ENCODE measurements at regions of chr4 and their contacts with region 1.

Region 1: GRCh38 chr4:55546756-55547465 is at the start of gene CLOCK:
- DNase-seq: peak; percentile 87 to 91
- H3K4me3 ChIP-seq: peak within 1 kb of the TSS; percentile 82
- H3K4me3 Mint-ChIP-seq: peak within 1 kb of the TSS; percentile 83
- H3K27ac Mint-ChIP-seq: peak within 1 kb of the TSS; percentile 63
- H3K4me1 ChIP-seq: peaks cover 19% of the 10 kb centered on the region
- H3K4me1 Mint-ChIP-seq: peaks cover 23% of the 10 kb centered on the region
- H3K27me3 ChIP-seq: no peaks in the 10 kb centered on the region
- H3K27me3 Mint-ChIP-seq: no peaks in the 10 kb centered on the region
- CTCF ChIP-seq: peak; percentile 47 to 50
- total RNA-seq, gene CLOCK: 9.5 and 12.0 TPM in 2 replicates

Region 2: GRCh38 chr4:55345980-55346850 is 200.7 kb before region 1 on chr4 and contains the start of gene SRD5A3:
- CTCF ChIA-PET with region 1: no interaction called
- POLR2A ChIA-PET with region 1: no interaction called
- intact Hi-C with region 1: loop called (anchors 5 kb)
- DNase-seq: peak; percentile 82 to 95
- H3K4me3 ChIP-seq: peak within 1 kb of the TSS; percentile 55
- H3K4me3 Mint-ChIP-seq: peak within 1 kb of the TSS; percentile 84
- H3K27ac Mint-ChIP-seq: peak within 1 kb of the TSS; percentile 93
- H3K4me1 ChIP-seq: peaks cover 9% of the 10 kb centered on the region; the same call in 1 of the 2 replicates
- H3K4me1 Mint-ChIP-seq: peaks cover 22% of the 10 kb centered on the region
- H3K27me3 ChIP-seq: no peaks in the 10 kb centered on the region
- H3K27me3 Mint-ChIP-seq: no peaks in the 10 kb centered on the region
- CTCF ChIP-seq: peak; percentile 71 to 84
- total RNA-seq, gene SRD5A3: 22.6 and 26.9 TPM in 2 replicates

Region 3: GRCh38 chr4:55435141-55435841 is 111.6 kb before region 1 on chr4:
- CTCF ChIA-PET with region 1: interaction called, 4 read pairs
- POLR2A ChIA-PET with region 1: no interaction called
- intact Hi-C with region 1: loop called (anchors 5 kb)
- DNase-seq: no peak
- H3K4me3 ChIP-seq: no peak overlapping the region
- H3K4me3 Mint-ChIP-seq: no peak overlapping the region
- H3K27ac Mint-ChIP-seq: no peak overlapping the region
- H3K4me1 ChIP-seq: peaks cover 48% of the 10 kb centered on the region
- H3K4me1 Mint-ChIP-seq: peaks cover 22% of the 10 kb centered on the region
- H3K27me3 ChIP-seq: no peaks in the 10 kb centered on the region
- H3K27me3 Mint-ChIP-seq: no peaks in the 10 kb centered on the region
- CTCF ChIP-seq: no peak

Region 4: DNA sequence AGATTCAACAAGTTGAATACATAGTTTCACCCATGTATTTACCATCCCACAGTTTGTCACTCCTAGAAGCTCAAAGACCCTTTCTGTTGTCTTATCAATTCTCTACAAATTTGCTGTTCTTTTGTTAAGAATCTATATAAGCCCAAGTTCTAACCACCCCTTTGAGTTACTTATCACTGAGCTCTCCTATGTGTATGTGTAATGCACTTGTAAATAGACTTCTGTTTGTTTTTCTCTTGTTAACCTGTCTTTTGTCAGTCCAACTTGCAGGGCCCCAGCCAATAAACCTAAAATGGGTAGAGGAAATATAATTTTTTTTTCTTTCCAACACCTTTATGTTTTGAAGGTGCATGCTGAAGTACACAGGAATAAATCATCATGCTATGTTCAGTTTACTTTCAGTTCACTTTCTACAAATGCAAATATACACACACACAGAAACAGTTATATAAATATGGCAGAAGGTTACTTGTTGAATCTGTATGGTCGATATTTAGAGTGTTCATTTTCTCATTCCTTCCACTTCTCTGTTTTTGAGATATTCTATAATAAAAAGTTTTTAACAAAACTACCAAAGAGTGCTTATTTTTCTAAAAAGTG is 22.1 kb after region 1 on chr4:
- CTCF ChIA-PET with region 1: interaction called, 4 read pairs
- POLR2A ChIA-PET with region 1: no interaction called
- intact Hi-C with region 1: loop called (anchors 2 kb)
- DNase-seq: peak in 1 of 2 experiments; percentile 25
- H3K4me3 ChIP-seq: no peak overlapping the region
- H3K4me3 Mint-ChIP-seq: no peak overlapping the region
- H3K27ac Mint-ChIP-seq: no peak overlapping the region
- H3K4me1 ChIP-seq: 0 out of 2 replicates have a peak, but pooled peaks cover 6% of the 10 kb centered on the region
- H3K4me1 Mint-ChIP-seq: peaks cover 12% of the 10 kb centered on the region
- H3K27me3 ChIP-seq: no peaks in the 10 kb centered on the region
- H3K27me3 Mint-ChIP-seq: peaks cover 15% of the 10 kb centered on the region
- CTCF ChIP-seq: no peak

Region 5: DNA sequence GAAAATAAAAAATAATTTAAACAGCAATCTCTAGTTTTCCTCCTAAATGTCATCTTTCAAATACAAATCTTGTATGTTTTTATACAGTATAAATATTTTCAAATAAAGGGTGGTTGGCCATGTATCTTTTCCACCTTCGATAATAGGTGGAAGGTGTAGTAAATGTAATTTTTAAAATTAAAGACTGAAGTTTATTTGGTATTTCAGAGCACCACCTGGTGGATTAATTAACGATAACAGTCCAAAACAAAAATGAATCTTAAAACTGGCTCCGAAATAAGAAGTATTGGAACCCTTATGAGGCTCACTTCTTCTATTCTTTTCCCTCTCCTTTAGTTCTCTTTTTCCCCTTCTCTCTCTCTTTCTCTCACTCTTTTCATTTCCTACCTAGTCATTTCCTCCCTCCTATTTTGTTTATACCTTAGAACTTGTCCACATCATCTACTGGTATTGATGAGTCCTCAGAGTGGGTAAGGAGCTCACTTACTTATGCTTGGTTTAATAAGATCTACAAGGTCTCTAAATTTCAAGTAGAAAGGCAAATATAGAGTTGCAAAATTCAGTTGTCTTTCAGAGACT is 189.8 kb after region 1 on chr4:
- CTCF ChIA-PET with region 1: no interaction called
- POLR2A ChIA-PET with region 1: no interaction called
- intact Hi-C with region 1: loop called (anchors 10 kb)
- DNase-seq: no peak
- H3K4me3 ChIP-seq: no peak overlapping the region
- H3K4me3 Mint-ChIP-seq: no peak overlapping the region
- H3K27ac Mint-ChIP-seq: no peak overlapping the region
- H3K4me1 ChIP-seq: no peaks in the 10 kb centered on the region
- H3K4me1 Mint-ChIP-seq: no peaks in the 10 kb centered on the region
- H3K27me3 ChIP-seq: no peaks in the 10 kb centered on the region
- H3K27me3 Mint-ChIP-seq: peaks cover 21% of the 10 kb centered on the region
- CTCF ChIP-seq: peak; percentile 10 to 19

Region 6: GRCh38 chr4:56245547-56246232 is 698.8 kb after region 1 on chr4:
- CTCF ChIA-PET with region 1: no interaction called
- POLR2A ChIA-PET with region 1: no interaction called
- intact Hi-C with region 1: no loop called
- DNase-seq: no peak
- H3K4me3 ChIP-seq: no peak overlapping the region
- H3K4me3 Mint-ChIP-seq: no peak overlapping the region
- H3K27ac Mint-ChIP-seq: peak overlapping the region; percentile 16
- H3K4me1 ChIP-seq: peaks cover 62% of the 10 kb centered on the region
- H3K4me1 Mint-ChIP-seq: peaks cover 44% of the 10 kb centered on the region
- H3K27me3 ChIP-seq: no peaks in the 10 kb centered on the region
- H3K27me3 Mint-ChIP-seq: no peaks in the 10 kb centered on the region
- CTCF ChIP-seq: no peak